ENCODE measurements at regions of chr15 and their contacts with region 1.

Region 1: DNA sequence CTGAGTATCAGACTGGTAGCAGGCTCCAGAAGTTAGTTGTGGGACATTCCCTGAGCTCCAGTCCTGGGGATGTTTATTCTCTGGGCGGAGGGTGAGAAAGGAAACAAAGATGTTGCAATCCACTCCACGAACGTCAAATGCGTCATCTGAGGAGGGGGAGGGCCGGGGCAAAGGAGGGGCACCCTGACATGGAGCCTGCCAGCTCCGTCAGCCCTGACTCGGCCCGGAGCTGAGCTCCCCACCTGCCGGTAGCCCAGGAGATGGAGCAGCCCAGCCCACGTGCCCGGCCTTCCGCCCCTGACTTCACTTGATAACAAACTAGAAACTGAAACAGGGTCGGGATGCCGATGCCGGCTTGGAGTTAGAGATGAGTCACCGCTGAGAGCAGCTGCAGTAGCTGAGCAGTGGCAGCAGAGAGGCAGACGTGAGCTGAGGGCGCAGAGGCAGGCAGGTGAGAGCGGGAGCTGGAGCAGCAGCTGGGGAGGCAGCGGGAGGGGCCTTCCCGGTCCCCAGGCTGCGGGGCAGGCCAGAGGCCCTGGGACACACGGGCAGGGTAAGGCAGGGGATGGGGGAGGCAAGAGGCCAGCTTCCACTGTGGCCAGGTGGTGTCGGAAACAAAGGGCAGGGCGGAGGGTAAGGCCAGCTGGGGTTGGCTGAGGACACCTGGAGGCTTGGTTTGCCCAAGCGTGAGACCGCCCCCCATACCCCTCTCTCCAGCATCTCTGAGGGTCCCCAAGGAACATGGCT is at the start of gene ISG20:
- DNase-seq: peak; percentile 86 to 87
- H3K4me3 ChIP-seq: peak within 1 kb of the TSS; percentile 1 to 44 (median 16); a peak in 6 of 8 replicates
- H3K27ac ChIP-seq: peak within 1 kb of the TSS; percentile 48; the same call in 1 of the 2 replicates
- H3K4me1 ChIP-seq: peaks cover 5 to 19% (median 16%) of the 10 kb centered on the region in 4 experiments
- H3K27me3 ChIP-seq: no peaks in the 10 kb centered on the region
- CTCF ChIP-seq: peak; percentile 51 to 56 (median 54)
- EP300 ChIP-seq: peak in 1 of 2 experiments; percentile 86; a peak in 1 of 3 replicates
- POLR2A ChIP-seq: peak; percentile 28 to 80
- RAD21 ChIP-seq: peak; percentile 25 to 48; a peak in 3 of 4 replicates
- total RNA-seq, gene ISG20: 2.9 and 4.0 TPM in 2 replicates

Region 2: DNA sequence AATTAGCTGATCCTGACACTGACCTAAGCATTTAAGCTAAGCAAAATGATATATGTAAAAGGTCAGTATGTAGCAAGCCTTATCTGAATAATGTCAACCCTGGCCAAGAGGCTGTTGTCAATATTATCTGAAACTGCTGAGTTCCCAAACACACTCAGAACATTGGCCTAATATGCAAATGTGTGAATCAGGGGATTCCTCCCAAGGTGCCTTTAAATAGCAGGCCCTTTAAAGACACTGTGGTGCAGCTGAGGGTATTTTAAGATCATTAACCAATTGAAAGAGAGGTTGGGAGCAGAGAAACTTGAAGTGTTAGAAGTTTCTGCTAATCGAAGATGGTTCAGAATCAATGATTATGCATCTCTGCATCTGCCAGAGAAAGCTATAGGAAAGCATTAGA is 589.3 kb before region 1 on chr15:
- CTCF ChIA-PET with region 1: no interaction called
- POLR2A ChIA-PET with region 1: no interaction called
- DNase-seq: no peak
- H3K4me3 ChIP-seq: no peak overlapping the region
- H3K27ac ChIP-seq: no peak overlapping the region
- H3K4me1 ChIP-seq: peaks cover 0 to 2% (median 0%) of the 10 kb centered on the region in 4 experiments; a peak in 3 of 7 replicates
- H3K27me3 ChIP-seq: no peaks in the 10 kb centered on the region
- CTCF ChIP-seq: no peak
- EP300 ChIP-seq: no peak
- POLR2A ChIP-seq: no peak
- RAD21 ChIP-seq: no peak

Region 3: DNA sequence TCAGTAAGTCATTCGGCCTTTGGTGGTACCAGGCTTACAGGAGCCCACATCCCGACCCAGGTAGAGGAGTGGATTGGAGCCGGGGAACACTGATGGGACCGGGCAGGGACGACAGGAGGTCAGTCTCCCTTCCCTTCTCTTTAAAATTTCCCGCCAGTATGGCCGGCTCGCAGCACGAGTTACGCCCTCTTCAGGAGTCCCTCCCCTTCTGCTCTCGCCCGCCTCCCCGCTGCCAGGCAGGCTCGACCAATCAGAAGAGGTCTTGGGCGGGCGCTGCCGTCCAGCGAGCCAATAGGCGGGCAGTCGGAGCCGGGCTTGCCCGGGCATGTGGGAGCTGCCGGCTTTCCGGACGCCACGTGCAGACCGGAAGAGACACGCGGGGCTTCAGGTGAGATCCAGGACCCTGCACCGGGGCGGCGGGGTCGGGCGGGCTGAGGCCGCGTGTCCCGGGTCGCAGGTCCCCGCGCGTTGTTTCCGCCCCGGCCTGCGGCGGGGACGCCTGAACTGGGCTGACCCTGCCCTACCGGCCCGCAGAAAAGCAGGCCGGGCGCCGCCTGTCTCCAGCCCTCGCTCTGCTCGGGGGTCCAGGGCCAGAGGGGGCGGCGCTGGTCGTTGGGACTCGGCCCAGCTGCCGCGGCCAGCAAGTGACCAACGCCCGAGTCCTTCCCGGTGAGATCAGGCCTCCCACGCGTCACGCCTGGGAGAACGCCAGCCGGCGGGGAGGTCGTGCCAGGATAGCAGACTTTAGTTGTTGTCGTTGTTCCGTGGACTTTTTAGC is 17.6 kb before region 1 on chr15 and contains the start of gene AEN:
- CTCF ChIA-PET with region 1: interaction called, 11 read pairs
- POLR2A ChIA-PET with region 1: interaction called, 52 read pairs
- DNase-seq: peak; percentile 91 to 95
- H3K4me3 ChIP-seq: peak within 1 kb of the TSS; percentile 81 to 99 (median 97)
- H3K27ac ChIP-seq: peak within 1 kb of the TSS; percentile 92
- H3K4me1 ChIP-seq: peaks cover 12 to 24% (median 16%) of the 10 kb centered on the region in 4 experiments
- H3K27me3 ChIP-seq: no peaks in the 10 kb centered on the region
- CTCF ChIP-seq: no peak
- EP300 ChIP-seq: no peak
- POLR2A ChIP-seq: peak; percentile 83 to 96
- RAD21 ChIP-seq: no peak
- total RNA-seq, gene AEN: 122 and 125 TPM in 2 replicates

Region 4: GRCh38 chr15:88649286-88649733 is 10.5 kb after region 1 on chr15:
- CTCF ChIA-PET with region 1: interaction called, 5 read pairs
- POLR2A ChIA-PET with region 1: interaction called, 11 read pairs
- DNase-seq: no peak
- H3K4me3 ChIP-seq: no peak overlapping the region
- H3K27ac ChIP-seq: no peak overlapping the region
- H3K4me1 ChIP-seq: peaks cover 0 to 19% (median 10%) of the 10 kb centered on the region in 4 experiments; a peak in 6 of 7 replicates
- H3K27me3 ChIP-seq: no peaks in the 10 kb centered on the region
- CTCF ChIP-seq: no peak
- EP300 ChIP-seq: no peak
- POLR2A ChIP-seq: no peak
- RAD21 ChIP-seq: no peak

Measured in H1 (cell line).